Dendritic cell treated with granulocyte-macrophage colony-stimulating factor and Interleukin-4, amounts not matched to agents 40 ng/mL and 50 ng/mL, for 4 days (primary cell): ENCODE measurements at regions of chr2 and their contacts with region 1.

Region 1: GRCh38 chr2:172931918-172932520 is 143.6 kb upstream of the MAP3K20 start:
- H3K4me3 Mint-ChIP-seq: no peak overlapping the region
- H3K27ac Mint-ChIP-seq: no peak overlapping the region
- H3K4me1 Mint-ChIP-seq: peaks cover 17% of the 10 kb centered on the region
- H3K27me3 Mint-ChIP-seq: no peaks in the 10 kb centered on the region

Region 2: GRCh38 chr2:172806493-172806892 is 125.5 kb before region 1 on chr2:
- intact Hi-C with region 1: loop called (anchors 1 kb)
- H3K4me3 Mint-ChIP-seq: no peak overlapping the region
- H3K27ac Mint-ChIP-seq: no peak overlapping the region
- H3K4me1 Mint-ChIP-seq: no peaks in the 10 kb centered on the region
- H3K27me3 Mint-ChIP-seq: peaks cover 10% of the 10 kb centered on the region

Region 3: GRCh38 chr2:172864182-172864581 is 67.8 kb before region 1 on chr2:
- intact Hi-C with region 1: loop called (anchors 1 kb)
- H3K4me3 Mint-ChIP-seq: no peak overlapping the region
- H3K27ac Mint-ChIP-seq: no peak overlapping the region
- H3K4me1 Mint-ChIP-seq: no peaks in the 10 kb centered on the region
- H3K27me3 Mint-ChIP-seq: peaks cover 21% of the 10 kb centered on the region